Left lung (tissue), 14 donors: ENCODE measurements at regions of chr7 and their contacts with region 1.

Region 1: GRCh38 chr7:38656968-38657367 is 25.8 kb upstream of the AMPH start:
- DNase-seq: no peak
- ATAC-seq: peak; percentile 47
- H3K4me3 ChIP-seq: no peak overlapping the region
- H3K27ac ChIP-seq: peak overlapping the region in 1 of 2 donors; percentile 61
- H3K4me1 ChIP-seq: peaks cover 0 to 19% of the 10 kb centered on the region in 2 donors
- H3K27me3 ChIP-seq: no peaks in the 10 kb centered on the region
- CTCF ChIP-seq: no peak

Region 2: GRCh38 chr7:38296059-38296857 is 360.7 kb before region 1 on chr7:
- intact Hi-C with region 1: no loop called
- DNase-seq: no peak
- ATAC-seq: no peak
- H3K4me3 ChIP-seq: no peak overlapping the region
- H3K27ac ChIP-seq: no peak overlapping the region
- H3K4me1 ChIP-seq: no peaks in the 10 kb centered on the region
- H3K27me3 ChIP-seq: no peaks in the 10 kb centered on the region
- CTCF ChIP-seq: no peak

Region 3: DNA sequence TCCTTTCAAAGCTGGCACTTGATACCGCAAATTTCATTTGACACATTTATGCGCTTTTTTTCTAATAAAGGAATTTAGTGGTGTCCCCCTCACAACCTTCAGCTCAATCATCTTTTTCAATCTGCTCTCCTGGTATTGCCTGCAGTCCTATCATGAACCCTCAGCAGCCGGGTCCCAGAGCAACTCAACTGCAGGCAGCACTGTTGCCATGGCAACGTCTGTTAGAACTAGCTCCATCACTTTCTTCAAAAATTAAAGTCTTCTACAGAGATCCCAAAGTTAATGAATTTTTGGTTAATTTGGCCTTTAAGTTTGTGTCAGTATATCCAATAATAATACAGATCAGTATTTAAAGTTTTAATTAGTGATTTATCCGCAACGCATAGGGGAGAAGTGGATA is 247.4 kb before region 1 on chr7:
- intact Hi-C with region 1: loop called in 1 of 2 experiments (anchors 10 kb)
- DNase-seq: no peak
- ATAC-seq: no peak
- H3K4me3 ChIP-seq: no peak overlapping the region
- H3K27ac ChIP-seq: no peak overlapping the region
- H3K4me1 ChIP-seq: no peaks in the 10 kb centered on the region
- H3K27me3 ChIP-seq: no peaks in the 10 kb centered on the region
- CTCF ChIP-seq: no peak

Region 4: GRCh38 chr7:38550836-38551235 is 106.1 kb before region 1 on chr7:
- intact Hi-C with region 1: no loop called
- DNase-seq: no peak
- ATAC-seq: no peak
- H3K4me3 ChIP-seq: no peak overlapping the region
- H3K27ac ChIP-seq: no peak overlapping the region
- H3K4me1 ChIP-seq: no peaks in the 10 kb centered on the region
- H3K27me3 ChIP-seq: no peaks in the 10 kb centered on the region
- CTCF ChIP-seq: no peak

Region 5: GRCh38 chr7:38889861-38890432 is 233.0 kb after region 1 on chr7:
- intact Hi-C with region 1: no loop called
- DNase-seq: no peak
- ATAC-seq: peak; percentile 38
- H3K4me3 ChIP-seq: no peak overlapping the region
- H3K27ac ChIP-seq: no peak overlapping the region
- H3K4me1 ChIP-seq: no peaks in the 10 kb centered on the region
- H3K27me3 ChIP-seq: no peaks in the 10 kb centered on the region
- CTCF ChIP-seq: peak; percentile 15 to 24